ENCODE measurements at regions of chr2 and their contacts with region 1.

Region 1: GRCh38 chr2:65432227-65433190 is at the start of gene SPRED2:
- DNase-seq: peak; percentile 89
- H3K4me3 Mint-ChIP-seq: peak within 1 kb of the TSS; percentile 91
- H3K27ac Mint-ChIP-seq: peak within 1 kb of the TSS; percentile 75
- H3K4me1 Mint-ChIP-seq: peaks cover 11% of the 10 kb centered on the region
- H3K27me3 Mint-ChIP-seq: peaks cover 26% of the 10 kb centered on the region
- total RNA-seq, gene SPRED2: 8.0 to 11.4 TPM

Region 2: DNA sequence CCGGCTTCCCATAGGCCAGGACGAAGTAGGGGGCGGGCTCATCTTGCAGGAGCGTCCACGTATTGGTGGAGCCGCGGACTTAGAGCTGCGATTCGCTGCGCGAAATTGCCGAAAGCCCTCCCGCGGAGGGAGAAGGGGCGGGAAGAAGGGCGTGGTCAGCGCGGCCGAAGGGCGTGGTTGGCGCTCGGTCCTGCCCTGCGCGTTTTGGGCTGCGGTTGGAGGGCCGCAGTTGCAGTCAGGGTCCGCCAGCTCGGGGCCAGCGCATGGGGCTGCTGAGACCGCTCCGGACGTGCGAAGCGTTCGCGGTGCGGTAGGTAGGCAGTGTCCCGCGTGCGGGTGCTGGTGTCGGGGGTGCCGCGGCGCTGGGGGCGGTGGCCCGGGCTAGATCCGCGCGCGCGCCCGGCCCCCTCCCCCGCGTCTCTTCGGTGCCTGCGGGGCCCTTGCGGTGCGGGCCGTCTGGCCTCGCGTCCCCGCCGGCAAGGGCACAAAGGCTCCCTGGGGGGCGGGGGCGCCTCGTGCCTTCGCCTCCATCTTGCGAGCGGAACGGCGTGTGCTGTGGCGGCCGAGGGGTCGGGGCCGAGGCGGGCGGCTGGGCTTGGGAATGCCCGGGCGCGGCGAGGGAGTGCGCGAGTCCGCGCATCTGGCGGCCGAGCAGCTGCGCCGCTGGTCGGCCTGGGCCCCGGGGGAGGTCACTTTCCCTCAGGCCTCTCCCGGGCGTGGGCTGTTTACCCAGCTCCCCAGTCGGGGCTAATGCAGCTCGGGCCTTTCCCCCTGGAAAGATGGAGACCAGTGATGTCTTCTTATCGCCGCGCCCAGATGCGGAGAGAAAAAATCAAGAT is 376.1 kb before region 1 on chr2 and contains the start of gene CEP68:
- CTCF ChIA-PET with region 1: no interaction called
- intact Hi-C with region 1: loop called (anchors 1 kb)
- DNase-seq: peak; percentile 98
- H3K4me3 Mint-ChIP-seq: peak within 1 kb of the TSS; percentile 93
- H3K27ac Mint-ChIP-seq: peak within 1 kb of the TSS; percentile 67
- H3K4me1 Mint-ChIP-seq: peaks cover 51% of the 10 kb centered on the region
- H3K27me3 Mint-ChIP-seq: no peaks in the 10 kb centered on the region
- total RNA-seq, gene CEP68: 6.0 to 7.3 TPM

Region 3: GRCh38 chr2:65227425-65228262 is 204.9 kb before region 1 on chr2 and contains the start of gene ACTR2:
- CTCF ChIA-PET with region 1: interaction called, 3 read pairs
- intact Hi-C with region 1: loop called (anchors 1 kb)
- DNase-seq: peak; percentile 96
- H3K4me3 Mint-ChIP-seq: peak within 1 kb of the TSS; percentile 98
- H3K27ac Mint-ChIP-seq: peak within 1 kb of the TSS; percentile 99
- H3K4me1 Mint-ChIP-seq: peaks cover 41% of the 10 kb centered on the region
- H3K27me3 Mint-ChIP-seq: no peaks in the 10 kb centered on the region
- total RNA-seq, gene ACTR2: 358 to 366 TPM

Region 4: DNA sequence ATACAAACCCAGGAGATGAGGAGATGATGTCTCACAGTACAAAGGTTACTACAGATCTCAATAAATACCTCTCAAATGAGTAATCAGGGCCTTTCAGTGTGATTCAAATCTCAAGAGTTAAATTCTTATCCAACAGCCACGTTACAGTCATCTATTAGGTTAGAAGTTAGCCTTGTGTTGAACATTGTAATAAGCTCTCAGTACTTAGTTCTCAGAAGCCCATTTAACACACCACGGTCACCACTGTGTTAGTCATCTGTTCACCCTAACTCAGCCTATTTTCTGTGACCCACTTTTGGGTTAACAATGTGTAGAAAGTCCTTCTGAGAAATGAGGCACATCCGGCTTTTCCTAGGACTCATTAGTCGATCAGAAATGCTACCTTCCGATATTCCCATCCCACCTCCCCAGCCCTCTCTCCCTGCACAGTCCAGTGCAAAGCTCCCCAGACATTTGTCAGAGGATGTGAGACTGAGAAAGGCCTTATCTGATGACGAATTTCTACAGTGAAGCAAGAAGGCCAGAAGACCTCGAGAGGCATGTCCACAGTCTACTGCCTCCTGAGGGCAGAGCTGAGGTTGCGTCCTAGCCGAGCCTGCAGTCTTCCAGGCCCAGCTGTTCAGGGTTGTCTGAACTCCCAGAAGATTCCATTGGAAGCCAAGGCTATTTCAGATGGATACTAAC is 112.3 kb before region 1 on chr2:
- CTCF ChIA-PET with region 1: no interaction called
- intact Hi-C with region 1: loop called (anchors 1 kb)
- DNase-seq: no peak
- H3K4me3 Mint-ChIP-seq: no peak overlapping the region
- H3K27ac Mint-ChIP-seq: no peak overlapping the region
- H3K4me1 Mint-ChIP-seq: peaks cover 11% of the 10 kb centered on the region
- H3K27me3 Mint-ChIP-seq: no peaks in the 10 kb centered on the region

Region 5: GRCh38 chr2:65382776-65383357 is 49.6 kb before region 1 on chr2:
- CTCF ChIA-PET with region 1: interaction called, 5 read pairs
- intact Hi-C with region 1: loop called (anchors 1 kb)
- DNase-seq: peak; percentile 94
- H3K4me3 Mint-ChIP-seq: peak overlapping the region; percentile 23
- H3K27ac Mint-ChIP-seq: no peak overlapping the region
- H3K4me1 Mint-ChIP-seq: peaks cover 24% of the 10 kb centered on the region
- H3K27me3 Mint-ChIP-seq: no peaks in the 10 kb centered on the region

Region 6: DNA sequence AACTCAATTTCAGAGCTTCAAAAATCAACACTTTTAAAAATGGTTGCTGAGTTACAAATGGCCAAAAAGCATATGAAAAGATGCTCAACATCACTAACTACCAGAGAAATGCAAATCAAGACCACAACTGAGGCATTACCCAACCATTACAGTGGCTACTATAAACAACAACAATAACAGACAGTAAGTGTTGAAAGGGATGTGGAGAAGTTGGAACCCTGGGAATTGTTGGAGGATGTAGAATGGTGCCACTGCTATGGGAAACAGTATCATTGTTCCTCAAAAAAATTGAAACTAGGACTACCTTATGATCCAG is 173.2 kb after region 1 on chr2:
- CTCF ChIA-PET with region 1: no interaction called
- intact Hi-C with region 1: loop called (anchors 1 kb)
- DNase-seq: no peak
- H3K4me3 Mint-ChIP-seq: no peak overlapping the region
- H3K27ac Mint-ChIP-seq: peak overlapping the region; percentile 57
- H3K4me1 Mint-ChIP-seq: peaks cover 19% of the 10 kb centered on the region
- H3K27me3 Mint-ChIP-seq: no peaks in the 10 kb centered on the region

Measured in activated naive CD4-positive, alpha-beta T cell treated with anti-CD3 and anti-CD28 coated beads for 36 hours (primary cell).